ENCODE measurements at regions of chr1 and their contacts with region 1.

Region 1: DNA sequence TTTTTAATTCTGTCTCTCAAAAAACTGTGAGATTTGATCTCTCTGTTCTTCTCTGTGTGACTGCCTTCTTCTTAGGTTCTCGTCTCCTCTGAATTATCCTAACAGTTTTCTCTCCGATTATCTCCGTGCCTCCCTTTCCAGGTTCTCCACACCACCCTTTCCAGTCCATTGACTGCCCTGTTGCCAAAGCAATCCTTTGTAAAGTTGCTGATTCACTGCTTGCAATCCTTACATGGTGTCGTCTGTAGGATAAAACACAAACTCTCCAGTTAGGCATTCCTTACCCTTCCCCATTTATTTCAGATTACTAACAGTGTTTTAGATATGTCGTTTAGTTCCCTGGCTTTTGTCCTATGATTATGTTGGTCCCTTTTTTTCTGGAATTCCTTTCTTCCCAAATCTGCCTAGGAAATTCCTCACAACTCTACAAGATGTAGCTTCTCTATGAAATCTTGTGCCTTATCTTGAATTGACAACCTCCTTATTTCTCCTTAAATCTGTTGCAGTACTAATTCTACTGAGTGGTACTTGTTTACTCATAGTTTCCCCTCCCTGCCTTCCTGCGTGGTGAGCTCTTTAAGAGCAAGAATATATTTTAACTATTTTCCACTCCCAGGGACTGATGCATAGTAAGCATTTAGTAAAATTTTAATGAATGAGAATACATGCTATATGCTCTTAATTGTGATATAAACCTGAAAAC is 22.3 kb downstream of the RCOR3 start:
- DNase-seq: no peak
- H3K4me3 Mint-ChIP-seq: no peak overlapping the region
- H3K27ac Mint-ChIP-seq: no peak overlapping the region
- H3K4me1 Mint-ChIP-seq: no peaks in the 10 kb centered on the region
- H3K27me3 Mint-ChIP-seq: no peaks in the 10 kb centered on the region

Region 2: GRCh38 chr1:210663730-210664573 is 617.5 kb before region 1 on chr1:
- intact Hi-C with region 1: no loop called
- DNase-seq: no peak
- H3K4me3 Mint-ChIP-seq: no peak overlapping the region
- H3K27ac Mint-ChIP-seq: no peak overlapping the region
- H3K4me1 Mint-ChIP-seq: no peaks in the 10 kb centered on the region
- H3K27me3 Mint-ChIP-seq: no peaks in the 10 kb centered on the region

Region 3: GRCh38 chr1:211296396-211296795 is 14.9 kb after region 1 on chr1:
- intact Hi-C with region 1: loop called (anchors 1 kb)
- DNase-seq: no peak
- H3K4me3 Mint-ChIP-seq: no peak overlapping the region
- H3K27ac Mint-ChIP-seq: peak overlapping the region; percentile 59
- H3K4me1 Mint-ChIP-seq: peaks cover 24% of the 10 kb centered on the region
- H3K27me3 Mint-ChIP-seq: no peaks in the 10 kb centered on the region

Region 4: GRCh38 chr1:211305044-211305443 is 23.6 kb after region 1 on chr1:
- intact Hi-C with region 1: loop called (anchors 2 kb)
- DNase-seq: no peak
- H3K4me3 Mint-ChIP-seq: no peak overlapping the region
- H3K27ac Mint-ChIP-seq: peak overlapping the region; percentile 41
- H3K4me1 Mint-ChIP-seq: peaks cover 34% of the 10 kb centered on the region
- H3K27me3 Mint-ChIP-seq: no peaks in the 10 kb centered on the region

Region 5: GRCh38 chr1:211352985-211353515 is 71.6 kb after region 1 on chr1:
- intact Hi-C with region 1: loop called (anchors 1 kb)
- DNase-seq: no peak
- H3K4me3 Mint-ChIP-seq: peak overlapping the region; percentile 66
- H3K27ac Mint-ChIP-seq: peak overlapping the region; percentile 80
- H3K4me1 Mint-ChIP-seq: peaks cover 65% of the 10 kb centered on the region
- H3K27me3 Mint-ChIP-seq: no peaks in the 10 kb centered on the region